CD8-positive, alpha-beta T cell (primary cell): ENCODE measurements at regions of chr17 and their contacts with region 1.

Region 1: GRCh38 chr17:2303204-2304188 is at the starts of genes SMG6 and SRR:
- DNase-seq: peak; percentile 89 to 98 (median 95)
- ATAC-seq: peak; percentile 91
- H3K4me3 ChIP-seq: peak within 1 kb of the TSS; percentile 95 to 98
- H3K4me3 Mint-ChIP-seq: peak within 1 kb of the TSS; percentile 93
- H3K27ac ChIP-seq: peak within 1 kb of the TSS; percentile 76 to 85
- H3K27ac Mint-ChIP-seq: peak within 1 kb of the TSS; percentile 91
- H3K4me1 ChIP-seq: peaks cover 18% of the 10 kb centered on the region
- H3K4me1 Mint-ChIP-seq: peaks cover 43% of the 10 kb centered on the region
- H3K27me3 ChIP-seq: no peaks in the 10 kb centered on the region
- H3K27me3 Mint-ChIP-seq: no peaks in the 10 kb centered on the region
- CTCF ChIP-seq: no peak
- total RNA-seq, gene SMG6: 36.1 to 37.8 TPM
- total RNA-seq, gene SRR: 1.8 to 2.9 TPM

Region 2: GRCh38 chr17:1511756-1512321 is 791.7 kb before region 1 on chr17:
- CTCF ChIA-PET with region 1: no interaction called
- POLR2A ChIA-PET with region 1: no interaction called
- intact Hi-C with region 1: no loop called
- DNase-seq: no peak
- ATAC-seq: no peak
- H3K4me3 ChIP-seq: no peak overlapping the region
- H3K4me3 Mint-ChIP-seq: no peak overlapping the region
- H3K27ac ChIP-seq: no peak overlapping the region
- H3K27ac Mint-ChIP-seq: no peak overlapping the region
- H3K4me1 ChIP-seq: peaks cover 20% of the 10 kb centered on the region
- H3K4me1 Mint-ChIP-seq: peaks cover 24% of the 10 kb centered on the region
- H3K27me3 ChIP-seq: no peaks in the 10 kb centered on the region
- H3K27me3 Mint-ChIP-seq: no peaks in the 10 kb centered on the region
- CTCF ChIP-seq: no peak

Region 3: GRCh38 chr17:2049333-2050299 is 253.9 kb before region 1 on chr17:
- CTCF ChIA-PET with region 1: no interaction called
- POLR2A ChIA-PET with region 1: no interaction called
- intact Hi-C with region 1: loop called in 1 of 2 experiments (anchors 1 kb)
- DNase-seq: peak; percentile 84 to 93 (median 88)
- ATAC-seq: peak; percentile 69
- H3K4me3 ChIP-seq: peak overlapping the region; percentile 51 to 73
- H3K4me3 Mint-ChIP-seq: peak overlapping the region; percentile 70
- H3K27ac ChIP-seq: peak overlapping the region in 1 of 2 experiments; percentile 52
- H3K27ac Mint-ChIP-seq: no peak overlapping the region
- H3K4me1 ChIP-seq: peaks cover 45% of the 10 kb centered on the region
- H3K4me1 Mint-ChIP-seq: peaks cover 29% of the 10 kb centered on the region
- H3K27me3 ChIP-seq: no peaks in the 10 kb centered on the region
- H3K27me3 Mint-ChIP-seq: peaks cover 8% of the 10 kb centered on the region
- CTCF ChIP-seq: no peak

Region 4: DNA sequence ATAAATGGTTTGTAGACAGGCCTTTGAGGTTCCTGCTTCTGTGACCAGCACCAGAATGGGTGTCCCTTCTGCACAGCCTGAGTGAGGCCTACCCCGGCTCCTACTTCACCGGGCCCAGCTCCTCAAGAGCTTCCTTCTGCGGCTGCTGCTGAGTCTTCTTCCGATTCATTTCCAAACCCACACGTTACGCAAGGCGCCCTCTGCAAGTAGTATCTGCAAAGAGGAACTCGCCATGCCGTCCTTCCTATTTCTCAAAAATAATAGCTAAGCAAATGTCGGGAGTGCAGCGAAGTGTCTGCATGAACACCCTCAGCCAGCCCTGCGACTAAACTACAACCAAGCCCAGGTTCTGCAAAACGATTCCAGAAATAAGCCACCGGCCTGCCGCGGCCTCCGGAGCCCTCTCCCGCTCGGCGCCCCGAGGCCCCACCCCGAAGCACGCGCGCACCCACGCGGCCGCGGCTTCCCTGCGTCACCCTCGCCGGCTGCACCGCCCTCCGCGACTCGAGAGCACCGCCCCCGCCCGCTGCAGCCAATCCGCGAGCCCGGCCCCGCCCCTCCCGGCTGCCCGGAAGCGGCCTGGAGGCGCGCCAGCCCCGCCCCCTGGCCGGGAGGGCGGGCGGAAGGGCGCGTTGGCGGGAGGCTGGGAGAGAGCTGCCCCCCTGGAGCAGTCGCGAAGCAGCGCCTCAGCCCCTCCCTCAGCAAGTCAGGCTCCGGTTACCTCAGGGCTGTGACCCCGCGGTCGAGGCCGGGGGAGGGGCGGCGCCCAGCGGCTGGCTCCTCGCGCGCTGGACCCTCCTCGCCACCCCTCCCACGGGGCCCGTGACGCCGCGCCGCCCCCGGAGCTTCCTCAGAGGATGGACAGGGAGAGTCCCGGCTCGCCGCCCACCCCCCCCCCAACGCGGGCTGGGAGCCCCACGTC is 89.0 kb after region 1 on chr17:
- CTCF ChIA-PET with region 1: no interaction called
- POLR2A ChIA-PET with region 1: interaction called, 7 read pairs
- intact Hi-C with region 1: loop called (anchors 2 kb)
- DNase-seq: peak; percentile 95 to 99 (median 97)
- ATAC-seq: peak; percentile 66
- H3K4me3 ChIP-seq: peak overlapping the region; percentile 83 to 95
- H3K4me3 Mint-ChIP-seq: peak overlapping the region; percentile 91
- H3K27ac ChIP-seq: peak overlapping the region; percentile 95 to 100
- H3K27ac Mint-ChIP-seq: peak overlapping the region; percentile 97
- H3K4me1 ChIP-seq: peaks cover 53% of the 10 kb centered on the region
- H3K4me1 Mint-ChIP-seq: peaks cover 50% of the 10 kb centered on the region
- H3K27me3 ChIP-seq: no peaks in the 10 kb centered on the region
- H3K27me3 Mint-ChIP-seq: no peaks in the 10 kb centered on the region
- CTCF ChIP-seq: no peak

Region 5: DNA sequence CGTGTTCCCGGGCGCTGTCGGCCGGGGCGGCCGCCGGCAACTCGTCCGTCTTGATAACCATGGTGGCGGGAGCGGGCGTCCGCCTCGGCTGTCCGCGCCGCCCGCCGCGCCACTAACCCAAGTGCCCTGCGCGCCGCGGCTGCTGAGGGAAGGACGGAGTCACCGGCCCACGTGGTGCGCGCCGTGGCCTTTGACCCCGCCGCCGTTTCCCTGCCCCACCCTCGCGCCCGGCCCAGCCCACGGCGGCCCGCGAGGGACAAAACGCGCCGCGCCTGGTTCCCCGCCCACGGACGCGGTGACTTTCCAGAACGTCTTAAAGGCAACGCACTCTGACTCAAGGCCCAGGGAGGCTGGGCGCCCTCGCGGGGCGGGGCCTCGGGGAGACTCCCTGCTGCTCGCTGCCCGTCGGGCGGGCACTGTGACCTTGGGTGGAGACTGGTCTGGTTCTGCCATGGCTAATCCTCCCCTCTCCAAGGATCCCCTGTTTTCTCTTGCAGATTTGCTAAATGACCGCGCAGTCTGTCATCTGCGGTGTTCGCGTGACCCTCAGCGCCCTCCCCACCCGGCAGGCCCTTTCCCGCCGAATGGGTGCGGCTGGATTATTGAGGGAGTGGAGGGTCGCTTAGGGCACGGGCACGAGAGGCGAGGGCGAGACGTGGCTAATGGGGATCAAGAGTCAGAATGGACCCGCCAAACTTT is 408.3 kb after region 1 on chr17 and contains the start of gene CLUH:
- CTCF ChIA-PET with region 1: no interaction called
- POLR2A ChIA-PET with region 1: no interaction called
- intact Hi-C with region 1: loop called in 1 of 2 experiments (anchors 10 kb)
- DNase-seq: peak; percentile 90 to 98 (median 94)
- ATAC-seq: peak; percentile 93
- H3K4me3 ChIP-seq: peak within 1 kb of the TSS; percentile 64 to 84
- H3K4me3 Mint-ChIP-seq: peak within 1 kb of the TSS; percentile 88
- H3K27ac ChIP-seq: peak within 1 kb of the TSS; percentile 41 to 47
- H3K27ac Mint-ChIP-seq: peak within 1 kb of the TSS; percentile 77
- H3K4me1 ChIP-seq: peaks cover 45% of the 10 kb centered on the region
- H3K4me1 Mint-ChIP-seq: peaks cover 35% of the 10 kb centered on the region
- H3K27me3 ChIP-seq: no peaks in the 10 kb centered on the region
- H3K27me3 Mint-ChIP-seq: no peaks in the 10 kb centered on the region
- CTCF ChIP-seq: no peak
- total RNA-seq, gene CLUH: 50.8 to 51.1 TPM